Mammary epithelial cell (primary cell): ENCODE measurements at regions of chr21 and their contacts with region 1.

Region 1: DNA sequence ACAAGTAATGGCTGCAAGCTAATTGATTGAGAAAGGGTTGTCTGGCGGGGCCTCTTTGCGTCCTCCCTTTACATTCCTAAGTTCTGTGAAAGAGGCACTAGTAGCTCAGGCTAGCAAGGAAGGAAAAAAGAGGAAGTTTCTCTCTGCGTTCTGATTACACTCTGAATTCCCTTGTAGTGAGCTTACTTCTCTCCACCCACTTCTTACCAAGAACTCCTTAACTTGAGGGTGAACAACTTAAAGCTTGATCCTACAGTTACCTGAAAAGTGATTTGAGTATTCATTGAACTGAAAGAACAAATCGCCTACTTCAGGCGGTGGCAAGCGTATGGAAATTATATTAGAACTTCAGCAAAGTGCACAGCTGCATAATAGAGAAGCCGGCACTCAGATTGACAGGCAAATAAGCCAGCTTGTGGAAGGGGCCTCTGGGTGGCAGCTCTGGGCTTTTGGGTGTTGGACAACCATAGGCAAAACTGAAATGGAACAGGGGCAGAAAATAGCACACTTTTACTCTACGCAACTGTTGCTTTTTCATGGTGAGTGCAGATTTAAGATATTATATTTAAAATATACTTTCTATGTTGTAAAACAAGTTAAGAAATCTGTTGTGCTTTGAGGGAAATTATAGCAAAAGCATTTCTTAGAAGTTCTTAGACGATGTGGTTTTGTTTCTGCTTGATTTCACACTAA is 464.5 kb downstream of the USP25 start:
- DNase-seq: peak; percentile 61
- H3K4me3 ChIP-seq: peak overlapping the region; percentile 31 to 46 (median 45)
- H3K27ac ChIP-seq: peak overlapping the region; percentile 81
- H3K4me1 ChIP-seq: no peaks in the 10 kb centered on the region
- H3K27me3 ChIP-seq: no peaks in the 10 kb centered on the region
- CTCF ChIP-seq: peak; percentile 7 to 30

Region 2: DNA sequence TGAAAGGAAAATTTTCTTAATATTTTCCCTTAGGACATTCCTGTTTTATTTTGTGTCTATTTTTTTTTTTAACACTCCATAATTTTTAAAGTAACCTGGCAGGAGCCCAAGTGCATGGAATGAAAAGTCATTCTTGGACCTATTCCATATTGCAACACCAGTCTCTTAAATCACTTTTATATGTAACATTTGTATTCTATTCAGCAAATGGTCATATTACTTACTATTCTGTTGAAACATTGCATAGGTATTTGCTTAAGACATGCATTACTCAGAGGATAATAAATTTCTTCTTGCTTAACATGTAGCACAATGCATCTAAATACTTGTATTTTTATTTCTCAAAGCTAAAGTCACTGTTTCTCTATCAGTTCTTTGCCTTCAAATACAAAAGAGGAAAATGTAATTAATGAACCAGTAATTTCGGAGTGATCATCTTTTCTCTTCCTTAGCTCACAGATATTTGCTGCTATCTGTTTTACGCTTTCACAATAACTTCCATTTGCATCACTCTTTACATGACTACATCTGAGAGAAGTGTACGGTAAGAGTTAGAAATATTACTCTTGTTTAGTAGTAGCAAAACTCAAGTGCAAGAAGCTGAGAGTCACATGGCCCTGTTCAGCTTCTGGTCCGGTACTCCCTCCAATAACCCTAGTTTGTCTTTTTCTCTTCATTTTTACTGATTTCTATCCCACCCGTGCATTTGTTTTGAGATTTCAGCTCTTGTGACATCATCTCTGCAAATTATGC is 69.7 kb before region 1 on chr21:
- CTCF ChIA-PET with region 1: no interaction called
- dilution Hi-C with region 1: no loop called
- in situ Hi-C with region 1: no loop called
- intact Hi-C with region 1: loop called (anchors 5 kb)
- DNase-seq: peak; percentile 73
- H3K4me3 ChIP-seq: no peak overlapping the region
- H3K27ac ChIP-seq: no peak overlapping the region
- H3K4me1 ChIP-seq: no peaks in the 10 kb centered on the region
- H3K27me3 ChIP-seq: no peaks in the 10 kb centered on the region
- CTCF ChIP-seq: no peak